ENCODE measurements at regions of chr4 and their contacts with region 1.

Region 1: GRCh38 chr4:76430519-76431388 is 4.3 kb upstream of the SHROOM3 start:
- DNase-seq: peak in 1 of 7 donors; percentile 11
- H3K4me3 ChIP-seq: no peak overlapping the region
- H3K27ac ChIP-seq: no peak overlapping the region
- H3K4me1 ChIP-seq: no peaks in the 10 kb centered on the region
- H3K27me3 ChIP-seq: no peaks in the 10 kb centered on the region
- CTCF ChIP-seq: peak; percentile 34 to 69 (median 52)
- POLR2A ChIP-seq: no peak

Region 2: GRCh38 chr4:76499461-76499860 is 68.7 kb after region 1 on chr4:
- intact Hi-C with region 1: loop called (anchors 5 kb)
- DNase-seq: no peak
- H3K4me3 ChIP-seq: no peak overlapping the region
- H3K27ac ChIP-seq: no peak overlapping the region
- H3K4me1 ChIP-seq: no peaks in the 10 kb centered on the region
- H3K27me3 ChIP-seq: no peaks in the 10 kb centered on the region
- CTCF ChIP-seq: no peak
- POLR2A ChIP-seq: no peak

Region 3: GRCh38 chr4:76504613-76505465 is 74.1 kb after region 1 on chr4:
- intact Hi-C with region 1: loop called in 1 of 2 experiments (anchors 5 kb)
- DNase-seq: peak in 1 of 7 donors; percentile 8
- H3K4me3 ChIP-seq: no peak overlapping the region
- H3K27ac ChIP-seq: no peak overlapping the region
- H3K4me1 ChIP-seq: no peaks in the 10 kb centered on the region
- H3K27me3 ChIP-seq: no peaks in the 10 kb centered on the region
- CTCF ChIP-seq: peak; percentile 47 to 74 (median 59)
- POLR2A ChIP-seq: no peak

Measured in adrenal gland (tissue), 19 donors.